GM12878 (cell line): ENCODE measurements at regions of chr11 and their contacts with region 1.

Region 1: DNA sequence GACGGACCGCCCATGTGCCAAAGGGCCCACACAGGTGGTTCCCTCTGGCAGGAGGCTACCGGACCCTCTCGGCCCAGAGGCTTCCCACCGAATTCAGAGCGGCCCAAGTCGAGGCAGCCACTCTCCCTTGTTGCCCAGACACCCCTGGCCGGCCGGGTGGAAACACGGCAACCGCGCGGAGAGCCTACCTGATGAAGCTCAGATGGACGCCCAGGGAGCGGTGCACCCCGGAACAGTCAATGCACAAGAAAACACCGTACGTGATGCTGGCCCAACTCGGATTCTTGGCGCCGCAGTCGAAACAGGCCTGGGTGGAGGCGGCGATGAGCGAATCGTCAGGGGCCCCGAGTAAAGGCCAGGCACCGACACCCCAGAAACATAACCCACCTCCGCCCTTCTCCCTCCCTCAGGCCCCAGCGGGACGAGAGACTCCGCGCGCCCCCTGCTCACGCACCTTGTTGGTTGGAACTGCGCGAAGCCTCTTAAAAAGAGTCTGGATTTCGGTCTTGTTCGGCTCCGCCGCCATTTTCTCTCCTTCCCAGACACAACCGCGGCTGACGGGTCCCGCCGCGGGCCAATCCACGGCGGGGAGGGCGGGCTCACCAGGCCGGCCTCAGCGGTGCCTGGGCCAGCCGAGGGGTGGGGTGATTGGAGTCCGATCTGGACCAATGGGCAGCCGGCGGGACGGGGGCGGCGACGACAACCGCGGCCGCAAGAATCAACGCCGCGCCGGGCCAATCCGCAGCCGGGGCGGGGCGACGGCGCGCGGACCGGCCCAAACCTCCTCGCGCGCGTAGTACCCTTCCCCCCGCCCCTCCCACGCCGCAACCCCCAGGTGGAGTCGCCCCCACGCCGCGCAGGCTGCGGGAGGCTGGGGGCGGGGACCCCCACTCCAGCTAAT is at the start of gene ARFGAP2:
- DNase-seq: peak; percentile 73
- ATAC-seq: peak; percentile 97
- H3K4me3 ChIP-seq: peak within 1 kb of the TSS; percentile 93
- H3K27ac ChIP-seq: peak within 1 kb of the TSS; percentile 90
- H3K4me1 ChIP-seq: peaks cover 14% of the 10 kb centered on the region
- H3K27me3 ChIP-seq: no peaks in the 10 kb centered on the region
- CTCF ChIP-seq: no peak
- EP300 ChIP-seq: 0 out of 4 replicates have a peak, but pooled peaks of 1 of the 2 experiments have one; percentile 4
- POLR2A ChIP-seq: peak; percentile 50
- RAD21 ChIP-seq: no peak
- polyA plus RNA-seq, gene ARFGAP2: 20.9 to 25.0 TPM

Region 2: DNA sequence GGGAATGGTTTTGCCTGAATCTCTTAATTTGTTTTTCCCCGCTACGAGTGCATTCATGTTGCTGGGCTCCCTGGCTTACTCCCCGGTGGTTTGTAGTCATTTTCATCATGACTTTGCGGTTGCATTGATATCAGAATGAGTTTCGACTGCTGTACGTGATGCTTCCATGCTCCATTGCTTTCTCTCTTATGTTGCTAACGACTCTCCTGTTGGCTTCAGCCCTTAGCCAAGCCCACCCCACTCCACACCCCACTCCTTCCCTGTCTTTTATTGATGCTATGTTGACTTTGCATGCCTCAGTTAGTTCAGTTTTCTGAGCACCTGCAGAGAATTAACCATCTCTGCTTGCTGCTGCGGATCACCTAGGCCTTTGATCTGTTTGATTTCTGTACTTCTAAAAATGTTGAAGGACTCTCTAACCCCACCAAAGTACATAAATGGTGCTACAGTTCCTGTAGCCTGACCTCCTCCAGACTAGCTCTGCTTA is 65.2 kb before region 1 on chr11:
- CTCF ChIA-PET with region 1: no interaction called
- POLR2A ChIA-PET with region 1: no interaction called
- RAD21 ChIA-PET with region 1: no interaction called
- SMC1A ChIA-PET with region 1: no interaction called
- in situ Hi-C with region 1: no loop called
- intact Hi-C with region 1: no loop called
- DNase-seq: peak; percentile 92
- ATAC-seq: peak; percentile 96
- H3K4me3 ChIP-seq: no peak overlapping the region
- H3K27ac ChIP-seq: no peak overlapping the region
- H3K4me1 ChIP-seq: peaks cover 37% of the 10 kb centered on the region
- H3K27me3 ChIP-seq: no peaks in the 10 kb centered on the region
- CTCF ChIP-seq: no peak
- EP300 ChIP-seq: peak; percentile 9 to 61; a peak in 1 of 4 replicates
- POLR2A ChIP-seq: no peak
- RAD21 ChIP-seq: no peak

Region 3: GRCh38 chr11:47248664-47249377 is 72.2 kb after region 1 on chr11 and contains the start of gene ACP2:
- CTCF ChIA-PET with region 1: interaction called, 37 read pairs
- POLR2A ChIA-PET with region 1: interaction called, 3 read pairs
- RAD21 ChIA-PET with region 1: interaction called, 7 read pairs
- SMC1A ChIA-PET with region 1: interaction called, 6 read pairs
- in situ Hi-C with region 1: no loop called
- intact Hi-C with region 1: loop called (anchors 2 kb)
- DNase-seq: peak; percentile 64
- ATAC-seq: peak; percentile 95
- H3K4me3 ChIP-seq: peak within 1 kb of the TSS; percentile 91
- H3K27ac ChIP-seq: peak within 1 kb of the TSS; percentile 90
- H3K4me1 ChIP-seq: peaks cover 8% of the 10 kb centered on the region
- H3K27me3 ChIP-seq: no peaks in the 10 kb centered on the region
- CTCF ChIP-seq: peak; percentile 33 to 51 (median 43); a peak in 5 of 6 replicates
- EP300 ChIP-seq: no peak
- POLR2A ChIP-seq: peak; percentile 94
- RAD21 ChIP-seq: peak; percentile 45
- polyA plus RNA-seq, gene ACP2: 0.98 to 1.1 TPM

Region 4: GRCh38 chr11:47269002-47269828 is 92.6 kb after region 1 on chr11:
- CTCF ChIA-PET with region 1: interaction called, 14 read pairs
- POLR2A ChIA-PET with region 1: interaction called, 4 read pairs
- RAD21 ChIA-PET with region 1: interaction called, 4 read pairs
- SMC1A ChIA-PET with region 1: interaction called, 3 read pairs
- in situ Hi-C with region 1: no loop called
- intact Hi-C with region 1: loop called (anchors 1 kb)
- DNase-seq: no peak
- ATAC-seq: peak; percentile 77
- H3K4me3 ChIP-seq: peak overlapping the region; percentile 78
- H3K27ac ChIP-seq: peak overlapping the region; percentile 79
- H3K4me1 ChIP-seq: peaks cover 23% of the 10 kb centered on the region
- H3K27me3 ChIP-seq: no peaks in the 10 kb centered on the region
- CTCF ChIP-seq: 0 out of 6 replicates have a peak, but pooled peaks of 1 of the 3 experiments have one; percentile 20
- EP300 ChIP-seq: 0 out of 4 replicates have a peak, but pooled peaks of 1 of the 2 experiments have one; percentile 18
- POLR2A ChIP-seq: peak; percentile 14
- RAD21 ChIP-seq: no peak

Region 5: GRCh38 chr11:47407746-47408590 is 231.4 kb after region 1 on chr11 and contains the start of gene SLC39A13:
- CTCF ChIA-PET with region 1: interaction called, 55 read pairs
- POLR2A ChIA-PET with region 1: no interaction called
- RAD21 ChIA-PET with region 1: interaction called, 3 read pairs
- SMC1A ChIA-PET with region 1: interaction called, 13 read pairs
- in situ Hi-C with region 1: no loop called
- intact Hi-C with region 1: loop called (anchors 1 kb)
- DNase-seq: peak; percentile 79
- ATAC-seq: peak; percentile 92
- H3K4me3 ChIP-seq: peak within 1 kb of the TSS; percentile 93
- H3K27ac ChIP-seq: peak within 1 kb of the TSS; percentile 95
- H3K4me1 ChIP-seq: peaks cover 17% of the 10 kb centered on the region
- H3K27me3 ChIP-seq: no peaks in the 10 kb centered on the region
- CTCF ChIP-seq: peak; percentile 71 to 96 (median 79); a peak in 4 of 6 replicates
- EP300 ChIP-seq: peak in 1 of 2 experiments; percentile 83; a peak in 2 of 4 replicates
- POLR2A ChIP-seq: peak; percentile 88
- RAD21 ChIP-seq: peak; percentile 87
- polyA plus RNA-seq, gene SLC39A13: 0.23 to 0.60 TPM

Region 6: DNA sequence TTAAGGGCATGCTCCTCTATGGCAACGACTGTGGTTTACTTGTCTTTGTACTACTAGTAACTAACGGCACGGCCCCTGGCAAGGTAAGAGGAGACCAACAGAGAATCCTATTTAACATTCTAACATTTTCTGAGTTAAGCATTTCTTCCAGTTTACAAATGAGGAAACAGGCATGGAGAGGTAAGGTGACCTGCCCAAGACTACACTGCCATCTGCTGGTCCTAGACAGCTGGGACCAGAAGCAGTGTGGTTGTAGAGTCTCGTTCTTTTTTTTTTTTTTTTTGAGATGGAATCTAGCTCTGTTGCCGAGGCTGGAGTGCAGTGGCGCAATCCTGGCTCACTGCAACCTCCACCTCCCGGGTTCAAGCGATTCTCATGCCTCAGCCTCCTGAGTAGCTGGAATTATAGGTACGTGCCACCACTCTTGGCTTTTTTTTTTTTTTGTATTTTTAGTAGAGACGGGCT is 277.6 kb after region 1 on chr11:
- CTCF ChIA-PET with region 1: interaction called, 9 read pairs
- POLR2A ChIA-PET with region 1: no interaction called
- RAD21 ChIA-PET with region 1: interaction called, 4 read pairs
- SMC1A ChIA-PET with region 1: interaction called, 3 read pairs
- in situ Hi-C with region 1: no loop called
- intact Hi-C with region 1: loop called (anchors 1 kb)
- DNase-seq: peak; percentile 37
- ATAC-seq: peak; percentile 97
- H3K4me3 ChIP-seq: no peak overlapping the region
- H3K27ac ChIP-seq: no peak overlapping the region
- H3K4me1 ChIP-seq: no peaks in the 10 kb centered on the region
- H3K27me3 ChIP-seq: no peaks in the 10 kb centered on the region
- CTCF ChIP-seq: peak; percentile 80 to 87 (median 83)
- EP300 ChIP-seq: no peak
- POLR2A ChIP-seq: no peak
- RAD21 ChIP-seq: peak; percentile 81

Region 7: DNA sequence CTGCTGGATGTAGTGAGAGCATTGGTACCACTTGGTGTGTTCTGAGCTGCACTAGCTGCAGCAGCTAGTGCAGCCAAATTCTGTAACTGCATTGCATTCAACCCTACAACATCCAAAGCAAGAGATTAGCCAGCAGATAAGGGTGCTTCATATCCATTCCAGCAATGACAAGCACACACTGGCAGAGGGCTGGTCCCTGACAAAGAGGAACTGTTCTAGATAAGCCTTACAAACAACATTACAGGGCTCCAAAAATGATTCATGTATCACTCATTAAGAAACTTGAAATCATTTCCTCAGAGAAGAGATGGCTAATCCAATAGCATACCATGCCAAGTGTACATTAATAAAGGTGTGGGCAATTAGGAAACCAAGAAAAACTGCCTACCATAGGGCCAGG is 300.7 kb after region 1 on chr11:
- CTCF ChIA-PET with region 1: no interaction called
- POLR2A ChIA-PET with region 1: no interaction called
- RAD21 ChIA-PET with region 1: no interaction called
- SMC1A ChIA-PET with region 1: no interaction called
- in situ Hi-C with region 1: no loop called
- intact Hi-C with region 1: no loop called
- DNase-seq: no peak
- ATAC-seq: no peak
- H3K4me3 ChIP-seq: no peak overlapping the region
- H3K27ac ChIP-seq: no peak overlapping the region
- H3K4me1 ChIP-seq: no peaks in the 10 kb centered on the region
- H3K27me3 ChIP-seq: no peaks in the 10 kb centered on the region
- CTCF ChIP-seq: no peak
- EP300 ChIP-seq: no peak
- POLR2A ChIP-seq: no peak
- RAD21 ChIP-seq: no peak